ENCODE measurements at regions of chr4 and their contacts with region 1.

Region 1: DNA sequence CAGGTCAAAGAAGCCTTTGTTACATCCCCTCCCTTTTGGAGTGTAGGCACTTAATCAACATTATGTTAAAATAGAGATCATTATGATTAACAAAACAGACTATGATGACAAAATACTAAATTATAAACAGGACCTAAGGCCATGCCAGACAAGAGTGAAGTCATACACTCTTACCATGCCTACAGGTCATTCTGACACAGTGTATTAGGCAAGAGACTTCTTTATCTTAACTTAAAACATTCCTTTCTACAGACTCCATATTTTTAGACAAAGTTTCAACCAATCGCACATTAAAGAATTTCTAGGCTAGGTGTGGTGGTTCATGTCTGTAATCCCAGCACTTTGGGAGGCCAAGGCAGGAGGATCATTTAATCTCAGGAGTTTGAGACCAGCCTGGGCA is 128.6 kb upstream of the SLC34A2 start:
- H3K4me3 ChIP-seq: no peak overlapping the region
- H3K27ac ChIP-seq: no peak overlapping the region
- H3K4me1 ChIP-seq: no peaks in the 10 kb centered on the region
- CTCF ChIP-seq: no peak

Region 2: DNA sequence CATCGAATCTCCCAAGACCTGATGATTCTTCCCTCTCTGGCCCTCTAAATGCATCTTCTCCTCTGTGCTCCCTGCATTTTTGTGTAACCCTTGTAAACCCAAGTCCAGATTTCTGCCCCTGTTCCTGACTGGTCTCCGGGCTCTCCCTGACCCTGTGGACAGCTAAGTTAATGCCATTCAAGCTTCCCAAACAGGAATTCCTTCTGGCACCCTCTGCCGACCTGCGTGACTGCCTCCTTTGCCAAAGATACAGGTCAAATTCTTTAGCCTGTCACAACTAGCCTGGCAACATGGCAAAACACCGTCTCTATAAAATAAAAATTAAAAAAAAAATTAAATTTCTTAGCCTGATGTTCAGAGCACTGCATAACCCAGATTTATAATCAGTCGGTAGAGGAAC is 14.5 kb before region 1 on chr4:
- CTCF ChIA-PET with region 1: interaction called, 5 read pairs
- POLR2A ChIA-PET with region 1: interaction called, 11 read pairs
- H3K4me3 ChIP-seq: no peak overlapping the region
- H3K27ac ChIP-seq: no peak overlapping the region
- H3K4me1 ChIP-seq: no peaks in the 10 kb centered on the region
- CTCF ChIP-seq: no peak